ENCODE measurements at regions of chr15 and their contacts with region 1.

Region 1: GRCh38 chr15:74889883-74890664 is at the start of gene MPI:
- H3K4me3 Mint-ChIP-seq: peak within 1 kb of the TSS; percentile 83
- H3K27ac Mint-ChIP-seq: peak within 1 kb of the TSS; percentile 78
- H3K4me1 Mint-ChIP-seq: peaks cover 63% of the 10 kb centered on the region
- H3K27me3 Mint-ChIP-seq: no peaks in the 10 kb centered on the region

Region 2: GRCh38 chr15:73637527-73637926 is 1252.5 kb before region 1 on chr15:
- intact Hi-C with region 1: no loop called
- H3K4me3 Mint-ChIP-seq: no peak overlapping the region
- H3K27ac Mint-ChIP-seq: no peak overlapping the region
- H3K4me1 Mint-ChIP-seq: peaks cover 16% of the 10 kb centered on the region
- H3K27me3 Mint-ChIP-seq: peaks cover 20% of the 10 kb centered on the region

Region 3: DNA sequence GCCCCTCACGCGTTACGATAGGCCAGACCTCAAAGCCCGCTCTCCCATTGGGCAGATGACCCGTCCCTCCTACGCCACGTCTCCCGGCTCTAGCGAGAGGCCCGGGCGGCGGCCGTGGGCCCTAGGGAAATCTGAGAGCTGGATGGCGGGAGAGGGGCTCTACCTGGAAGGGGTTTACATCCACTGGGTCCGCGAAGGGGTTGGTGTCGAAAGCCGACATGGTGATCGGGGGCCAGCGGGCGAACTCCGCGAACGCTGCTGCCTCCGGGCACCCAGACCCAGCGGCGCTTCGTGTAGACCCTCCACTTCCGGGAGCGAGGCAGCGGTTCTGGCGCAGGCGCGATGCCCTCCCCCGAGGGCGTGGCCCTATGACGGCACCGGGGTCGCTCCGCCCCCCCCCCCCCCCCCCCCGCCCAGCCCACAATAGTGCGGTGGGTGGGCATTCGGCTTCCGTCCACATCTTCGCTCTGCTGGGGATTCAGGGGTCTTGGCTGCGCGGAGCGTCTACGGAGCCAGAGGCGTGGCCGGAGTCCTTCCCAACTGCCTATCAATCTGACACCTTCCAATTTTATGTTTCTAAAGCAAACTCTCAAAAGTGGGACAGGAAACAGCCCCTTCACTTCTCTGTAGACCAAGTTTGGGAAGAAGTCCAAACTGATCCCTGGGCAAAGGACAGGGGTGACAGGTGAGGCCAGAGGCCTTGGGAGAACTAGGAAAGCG is 16.9 kb before region 1 on chr15 and contains the start of gene SCAMP2:
- intact Hi-C with region 1: loop called (anchors 2 kb)
- H3K4me3 Mint-ChIP-seq: peak within 1 kb of the TSS; percentile 95
- H3K27ac Mint-ChIP-seq: peak within 1 kb of the TSS; percentile 96
- H3K4me1 Mint-ChIP-seq: peaks cover 52% of the 10 kb centered on the region
- H3K27me3 Mint-ChIP-seq: peaks cover 1% of the 10 kb centered on the region

Measured in dendritic cell treated with granulocyte-macrophage colony-stimulating factor and Interleukin-4, amounts not matched to agents 40 ng/mL and 50 ng/mL, for 4 days (primary cell).